Naive thymus-derived CD4-positive, alpha-beta T cell (primary cell): ENCODE measurements at regions of chr5 and their contacts with region 1.

Region 1: GRCh38 chr5:90571147-90571773 is 12.7 kb downstream of the ADGRV1 start:
- DNase-seq: no peak
- ATAC-seq: no peak
- H3K4me3 ChIP-seq: no peak overlapping the region
- H3K4me3 Mint-ChIP-seq: no peak overlapping the region
- H3K27ac ChIP-seq: no peak overlapping the region
- H3K27ac Mint-ChIP-seq: no peak overlapping the region
- H3K4me1 ChIP-seq: no peaks in the 10 kb centered on the region
- H3K4me1 Mint-ChIP-seq: no peaks in the 10 kb centered on the region
- H3K27me3 ChIP-seq: no peaks in the 10 kb centered on the region
- H3K27me3 Mint-ChIP-seq: peaks cover 3 to 62% (median 50%) of the 10 kb centered on the region in 5 donors

Region 2: GRCh38 chr5:89849830-89850512 is 721.3 kb before region 1 on chr5:
- CTCF ChIA-PET with region 1: no interaction called
- POLR2A ChIA-PET with region 1: no interaction called
- intact Hi-C with region 1: loop called in 1 of 2 experiments (anchors 5 kb)
- DNase-seq: no peak
- ATAC-seq: no peak
- H3K4me3 ChIP-seq: no peak overlapping the region
- H3K4me3 Mint-ChIP-seq: no peak overlapping the region
- H3K27ac ChIP-seq: no peak overlapping the region
- H3K27ac Mint-ChIP-seq: no peak overlapping the region
- H3K4me1 ChIP-seq: no peaks in the 10 kb centered on the region
- H3K4me1 Mint-ChIP-seq: no peaks in the 10 kb centered on the region
- H3K27me3 ChIP-seq: no peaks in the 10 kb centered on the region
- H3K27me3 Mint-ChIP-seq: no peaks in the 10 kb centered on the region

Region 3: GRCh38 chr5:90585337-90585986 is 14.2 kb after region 1 on chr5:
- CTCF ChIA-PET with region 1: no interaction called
- POLR2A ChIA-PET with region 1: no interaction called
- intact Hi-C with region 1: no loop called
- DNase-seq: no peak
- ATAC-seq: no peak
- H3K4me3 ChIP-seq: no peak overlapping the region
- H3K4me3 Mint-ChIP-seq: no peak overlapping the region
- H3K27ac ChIP-seq: no peak overlapping the region
- H3K27ac Mint-ChIP-seq: no peak overlapping the region
- H3K4me1 ChIP-seq: no peaks in the 10 kb centered on the region
- H3K4me1 Mint-ChIP-seq: no peaks in the 10 kb centered on the region
- H3K27me3 ChIP-seq: peaks cover 0 to 6% of the 10 kb centered on the region in 2 donors
- H3K27me3 Mint-ChIP-seq: peaks cover 0 to 61% (median 47%) of the 10 kb centered on the region in 5 donors

Region 4: GRCh38 chr5:91816681-91817080 is 1245.4 kb after region 1 on chr5:
- CTCF ChIA-PET with region 1: no interaction called
- POLR2A ChIA-PET with region 1: no interaction called
- intact Hi-C with region 1: no loop called
- DNase-seq: no peak
- ATAC-seq: no peak
- H3K4me3 ChIP-seq: no peak overlapping the region
- H3K4me3 Mint-ChIP-seq: no peak overlapping the region
- H3K27ac ChIP-seq: no peak overlapping the region
- H3K27ac Mint-ChIP-seq: no peak overlapping the region
- H3K4me1 ChIP-seq: no peaks in the 10 kb centered on the region
- H3K4me1 Mint-ChIP-seq: no peaks in the 10 kb centered on the region
- H3K27me3 ChIP-seq: no peaks in the 10 kb centered on the region
- H3K27me3 Mint-ChIP-seq: no peaks in the 10 kb centered on the region